ENCODE measurements at regions of chr7 and their contacts with region 1.

Region 1: GRCh38 chr7:83410989-83411591 is 237.8 kb downstream of the SEMA3E start:
- DNase-seq: peak in 1 of 2 experiments; percentile 15
- H3K4me3 ChIP-seq: no peak overlapping the region
- H3K4me3 Mint-ChIP-seq: no peak overlapping the region
- H3K27ac Mint-ChIP-seq: no peak overlapping the region
- H3K4me1 ChIP-seq: no peaks in the 10 kb centered on the region
- H3K4me1 Mint-ChIP-seq: no peaks in the 10 kb centered on the region
- H3K27me3 ChIP-seq: no peaks in the 10 kb centered on the region
- H3K27me3 Mint-ChIP-seq: no peaks in the 10 kb centered on the region
- CTCF ChIP-seq: peak; percentile 70 to 79

Region 2: GRCh38 chr7:83301416-83301815 is 109.7 kb before region 1 on chr7:
- CTCF ChIA-PET with region 1: no interaction called
- POLR2A ChIA-PET with region 1: no interaction called
- intact Hi-C with region 1: no loop called
- DNase-seq: no peak
- H3K4me3 ChIP-seq: no peak overlapping the region
- H3K4me3 Mint-ChIP-seq: no peak overlapping the region
- H3K27ac Mint-ChIP-seq: no peak overlapping the region
- H3K4me1 ChIP-seq: no peaks in the 10 kb centered on the region
- H3K4me1 Mint-ChIP-seq: no peaks in the 10 kb centered on the region
- H3K27me3 ChIP-seq: no peaks in the 10 kb centered on the region
- H3K27me3 Mint-ChIP-seq: peaks cover 2% of the 10 kb centered on the region
- CTCF ChIP-seq: no peak

Region 3: DNA sequence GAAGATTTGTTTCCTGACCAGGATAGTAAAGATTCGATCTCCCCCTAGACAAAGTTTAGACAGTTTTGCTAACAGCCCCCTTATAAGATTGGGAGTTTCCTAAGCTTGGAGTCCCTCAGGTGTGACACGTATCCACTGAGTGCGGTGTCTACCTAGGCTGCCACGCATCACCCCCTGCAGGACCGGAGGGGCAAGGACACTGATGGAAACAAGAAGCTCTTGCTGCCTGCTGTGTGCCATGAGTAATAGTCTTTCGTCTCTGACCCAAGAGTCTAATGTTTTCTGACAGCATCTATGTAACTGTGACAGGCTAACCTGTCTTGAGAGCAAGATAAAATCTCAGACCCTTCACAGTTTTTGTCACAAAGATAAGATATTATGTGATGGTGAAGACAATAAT is 64.3 kb after region 1 on chr7:
- CTCF ChIA-PET with region 1: no interaction called
- POLR2A ChIA-PET with region 1: no interaction called
- intact Hi-C with region 1: loop called (anchors 1 kb)
- DNase-seq: peak; percentile 58 to 64
- H3K4me3 ChIP-seq: no peak overlapping the region
- H3K4me3 Mint-ChIP-seq: peak overlapping the region; percentile 28
- H3K27ac Mint-ChIP-seq: no peak overlapping the region
- H3K4me1 ChIP-seq: no peaks in the 10 kb centered on the region
- H3K4me1 Mint-ChIP-seq: no peaks in the 10 kb centered on the region
- H3K27me3 ChIP-seq: no peaks in the 10 kb centered on the region
- H3K27me3 Mint-ChIP-seq: peaks cover 6% of the 10 kb centered on the region
- CTCF ChIP-seq: peak; percentile 47 to 50

Region 4: DNA sequence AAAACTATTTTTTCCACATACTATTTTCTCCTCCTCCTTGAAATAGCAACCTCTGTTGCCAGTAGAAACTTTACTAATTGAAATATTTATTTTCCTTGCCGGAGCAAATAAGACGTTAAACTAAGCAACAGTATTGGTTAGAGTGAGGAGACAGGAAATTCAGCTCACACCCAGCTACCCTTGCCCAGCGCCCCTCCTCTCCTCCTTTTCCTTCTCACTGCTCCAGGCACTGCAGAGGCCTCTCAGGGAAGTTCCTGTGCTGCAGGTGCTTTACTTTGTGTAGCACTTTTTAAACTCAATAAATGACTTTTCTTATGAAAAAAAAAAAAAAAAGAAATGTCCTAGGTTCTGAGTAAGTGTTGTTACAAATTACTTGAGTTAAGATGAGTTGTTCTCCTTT is 103.9 kb after region 1 on chr7:
- CTCF ChIA-PET with region 1: no interaction called
- POLR2A ChIA-PET with region 1: no interaction called
- intact Hi-C with region 1: loop called (anchors 1 kb)
- DNase-seq: no peak
- H3K4me3 ChIP-seq: no peak overlapping the region
- H3K4me3 Mint-ChIP-seq: no peak overlapping the region
- H3K27ac Mint-ChIP-seq: no peak overlapping the region
- H3K4me1 ChIP-seq: no peaks in the 10 kb centered on the region
- H3K4me1 Mint-ChIP-seq: no peaks in the 10 kb centered on the region
- H3K27me3 ChIP-seq: no peaks in the 10 kb centered on the region
- H3K27me3 Mint-ChIP-seq: peaks cover 2% of the 10 kb centered on the region
- CTCF ChIP-seq: no peak

Region 5: DNA sequence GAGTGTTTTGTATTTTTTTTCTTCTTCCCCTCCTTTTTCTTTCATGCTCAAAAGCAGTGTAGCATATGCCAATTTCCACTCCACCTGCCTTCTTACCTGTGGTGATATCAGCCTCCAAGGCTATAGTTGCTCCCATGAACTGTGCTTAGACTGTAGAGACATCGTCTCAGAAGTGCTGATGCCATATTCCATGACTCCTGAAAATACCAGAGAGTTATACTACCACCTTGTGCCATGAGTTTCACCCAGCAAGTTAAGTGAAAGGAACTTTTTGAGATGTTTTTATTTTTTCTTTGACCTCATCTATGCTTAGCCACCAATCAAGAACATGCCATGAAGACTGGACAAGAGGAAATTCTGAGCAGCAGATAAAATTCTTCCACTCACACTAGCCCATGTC is 380.6 kb after region 1 on chr7:
- CTCF ChIA-PET with region 1: no interaction called
- POLR2A ChIA-PET with region 1: no interaction called
- intact Hi-C with region 1: loop called (anchors 2 kb)
- DNase-seq: no peak
- H3K4me3 ChIP-seq: no peak overlapping the region
- H3K4me3 Mint-ChIP-seq: no peak overlapping the region
- H3K27ac Mint-ChIP-seq: no peak overlapping the region
- H3K4me1 ChIP-seq: no peaks in the 10 kb centered on the region
- H3K4me1 Mint-ChIP-seq: no peaks in the 10 kb centered on the region
- H3K27me3 ChIP-seq: no peaks in the 10 kb centered on the region
- H3K27me3 Mint-ChIP-seq: peaks cover 2% of the 10 kb centered on the region
- CTCF ChIP-seq: no peak